B cell (primary cell): ENCODE measurements at regions of chr17 and their contacts with region 1.

Region 1: GRCh38 chr17:74736513-74737298 is at the start of gene RAB37:
- DNase-seq: peak; percentile 91
- ATAC-seq: peak; percentile 76
- H3K4me3 ChIP-seq: peak within 1 kb of the TSS; percentile 38 to 91 (median 75)
- H3K4me3 Mint-ChIP-seq: peak within 1 kb of the TSS; percentile 87
- H3K27ac ChIP-seq: peak within 1 kb of the TSS; percentile 52 to 74
- H3K27ac Mint-ChIP-seq: peak within 1 kb of the TSS; percentile 98
- H3K4me1 ChIP-seq: peaks cover 40 to 58% of the 10 kb centered on the region in 2 donors
- H3K4me1 Mint-ChIP-seq: peaks cover 42% of the 10 kb centered on the region
- H3K27me3 ChIP-seq: peaks cover 0 to 3% (median 0%) of the 10 kb centered on the region in 4 experiments
- H3K27me3 Mint-ChIP-seq: no peaks in the 10 kb centered on the region
- CTCF ChIP-seq: peak; percentile 68
- total RNA-seq, gene RAB37: 76.0 and 76.8 TPM in 2 replicates

Region 2: DNA sequence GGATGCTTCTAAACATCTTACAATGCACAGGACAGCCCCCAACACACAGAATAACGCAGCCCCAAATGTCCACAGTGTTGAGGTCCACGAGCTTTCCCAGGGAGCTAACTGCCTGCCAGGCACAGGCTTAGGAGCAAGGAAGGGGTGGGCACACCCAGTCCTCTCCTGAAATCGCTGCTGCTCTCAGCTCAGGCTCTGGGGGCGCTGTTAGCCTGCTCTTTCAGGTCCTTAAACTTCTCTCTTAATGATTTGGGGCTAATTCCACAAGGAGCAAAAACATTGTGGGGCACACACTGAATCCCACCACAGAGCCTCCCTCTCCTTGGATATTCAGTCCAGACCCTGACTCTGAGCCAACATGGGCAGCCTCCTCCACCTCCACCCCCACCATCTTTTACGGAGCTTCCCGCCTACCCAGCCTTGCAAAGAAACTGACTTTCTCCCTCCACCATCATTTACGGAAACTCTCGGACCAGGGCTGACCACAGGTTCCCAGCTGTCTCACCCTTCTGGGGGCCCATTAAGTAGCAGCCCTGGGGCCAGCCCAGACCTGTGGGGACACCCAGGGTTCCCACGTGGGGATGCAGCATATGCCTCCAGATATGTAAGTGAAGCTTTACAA is 170.5 kb before region 1 on chr17:
- CTCF ChIA-PET with region 1: interaction called, 46 read pairs
- POLR2A ChIA-PET with region 1: no interaction called
- intact Hi-C with region 1: loop called (anchors 1 kb)
- DNase-seq: peak; percentile 59
- ATAC-seq: peak; percentile 39
- H3K4me3 ChIP-seq: no peak overlapping the region
- H3K4me3 Mint-ChIP-seq: no peak overlapping the region
- H3K27ac ChIP-seq: no peak overlapping the region
- H3K27ac Mint-ChIP-seq: no peak overlapping the region
- H3K4me1 ChIP-seq: peaks cover 21 to 28% of the 10 kb centered on the region in 2 donors
- H3K4me1 Mint-ChIP-seq: peaks cover 10% of the 10 kb centered on the region
- H3K27me3 ChIP-seq: peaks cover 0 to 50% (median 6%) of the 10 kb centered on the region in 4 experiments
- H3K27me3 Mint-ChIP-seq: peaks cover 61% of the 10 kb centered on the region
- CTCF ChIP-seq: peak; percentile 64

Region 3: DNA sequence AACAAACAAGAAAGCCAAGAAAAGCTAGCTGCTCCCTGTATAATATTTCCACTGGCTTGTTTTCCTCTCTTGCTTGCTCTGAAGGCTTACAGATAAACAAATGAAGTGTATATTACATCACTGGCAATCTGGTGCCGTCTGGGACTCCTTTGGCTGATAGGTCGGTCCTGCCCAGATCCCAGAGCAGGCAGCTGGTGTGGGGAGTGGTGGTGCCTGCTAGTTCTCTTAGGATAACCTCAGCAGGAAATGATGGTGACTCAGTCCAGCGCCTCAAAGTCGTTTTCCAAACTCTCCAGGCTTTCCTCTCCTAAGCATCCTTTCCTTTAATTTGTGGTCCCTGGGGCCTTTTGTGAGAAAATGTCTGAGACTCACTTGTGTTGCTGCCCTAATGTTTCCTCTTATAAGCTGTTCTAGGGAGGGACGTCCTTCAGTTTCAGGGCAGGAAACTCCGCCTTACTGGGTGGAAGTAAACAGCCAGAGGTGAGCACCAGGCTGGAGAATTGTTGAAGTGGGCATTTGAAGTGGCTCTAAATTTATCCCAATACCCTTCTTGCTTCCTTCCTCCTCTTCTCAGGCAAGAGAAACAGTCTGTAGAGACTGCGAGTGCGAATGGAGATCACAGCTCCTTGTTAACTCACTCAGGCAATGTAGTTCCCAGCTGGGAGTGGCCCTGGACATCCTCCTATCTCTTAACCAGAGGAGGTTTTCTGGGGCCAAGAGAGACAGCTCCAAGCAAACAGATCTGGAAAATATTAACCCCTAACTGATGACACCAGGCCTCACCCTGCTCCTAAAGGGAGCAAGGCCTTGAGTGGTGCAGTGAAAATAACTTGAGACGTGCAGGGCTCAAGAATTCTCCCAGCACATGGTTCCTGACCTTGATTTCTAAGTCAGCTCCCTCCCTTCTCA is 58.9 kb before region 1 on chr17:
- CTCF ChIA-PET with region 1: interaction called, 13 read pairs
- POLR2A ChIA-PET with region 1: no interaction called
- intact Hi-C with region 1: no loop called
- DNase-seq: peak; percentile 24
- ATAC-seq: peak; percentile 21
- H3K4me3 ChIP-seq: peak overlapping the region in 1 of 5 experiments; percentile 2
- H3K4me3 Mint-ChIP-seq: peak overlapping the region; percentile 58
- H3K27ac ChIP-seq: no peak overlapping the region
- H3K27ac Mint-ChIP-seq: peak overlapping the region; percentile 71
- H3K4me1 ChIP-seq: peaks cover 22 to 23% of the 10 kb centered on the region in 2 donors
- H3K4me1 Mint-ChIP-seq: peaks cover 27% of the 10 kb centered on the region
- H3K27me3 ChIP-seq: peaks cover 0 to 28% (median 12%) of the 10 kb centered on the region in 4 experiments
- H3K27me3 Mint-ChIP-seq: peaks cover 33% of the 10 kb centered on the region
- CTCF ChIP-seq: no peak

Region 4: GRCh38 chr17:74723891-74724290 is 12.8 kb before region 1 on chr17:
- CTCF ChIA-PET with region 1: interaction called, 25 read pairs
- POLR2A ChIA-PET with region 1: no interaction called
- intact Hi-C with region 1: no loop called
- DNase-seq: no peak
- ATAC-seq: no peak
- H3K4me3 ChIP-seq: no peak overlapping the region
- H3K4me3 Mint-ChIP-seq: no peak overlapping the region
- H3K27ac ChIP-seq: no peak overlapping the region
- H3K27ac Mint-ChIP-seq: no peak overlapping the region
- H3K4me1 ChIP-seq: peaks cover 0 to 8% of the 10 kb centered on the region in 2 donors
- H3K4me1 Mint-ChIP-seq: no peaks in the 10 kb centered on the region
- H3K27me3 ChIP-seq: peaks cover 0 to 4% (median 0%) of the 10 kb centered on the region in 4 experiments
- H3K27me3 Mint-ChIP-seq: peaks cover 6% of the 10 kb centered on the region
- CTCF ChIP-seq: no peak

Region 5: GRCh38 chr17:74759243-74759801 is 22.6 kb after region 1 on chr17:
- CTCF ChIA-PET with region 1: interaction called, 18 read pairs
- POLR2A ChIA-PET with region 1: interaction called, 3 read pairs
- intact Hi-C with region 1: no loop called
- DNase-seq: peak; percentile 63
- ATAC-seq: peak; percentile 77
- H3K4me3 ChIP-seq: no peak overlapping the region
- H3K4me3 Mint-ChIP-seq: peak overlapping the region; percentile 56
- H3K27ac ChIP-seq: no peak overlapping the region
- H3K27ac Mint-ChIP-seq: peak overlapping the region; percentile 29
- H3K4me1 ChIP-seq: peaks cover 40 to 52% of the 10 kb centered on the region in 2 donors
- H3K4me1 Mint-ChIP-seq: peaks cover 46% of the 10 kb centered on the region
- H3K27me3 ChIP-seq: no peaks in the 10 kb centered on the region
- H3K27me3 Mint-ChIP-seq: no peaks in the 10 kb centered on the region
- CTCF ChIP-seq: no peak

Region 6: GRCh38 chr17:74776044-74776977 is 39.6 kb after region 1 on chr17 and contains the start of gene NAT9:
- CTCF ChIA-PET with region 1: interaction called, 76 read pairs
- POLR2A ChIA-PET with region 1: interaction called, 18 read pairs
- intact Hi-C with region 1: loop called (anchors 5 kb)
- DNase-seq: peak; percentile 98
- ATAC-seq: peak; percentile 79
- H3K4me3 ChIP-seq: peak within 1 kb of the TSS; percentile 66 to 79 (median 77)
- H3K4me3 Mint-ChIP-seq: peak within 1 kb of the TSS; percentile 99
- H3K27ac ChIP-seq: peak within 1 kb of the TSS; percentile 39 to 75
- H3K27ac Mint-ChIP-seq: peak within 1 kb of the TSS; percentile 96
- H3K4me1 ChIP-seq: peaks cover 40 to 46% of the 10 kb centered on the region in 2 donors
- H3K4me1 Mint-ChIP-seq: peaks cover 57% of the 10 kb centered on the region
- H3K27me3 ChIP-seq: no peaks in the 10 kb centered on the region
- H3K27me3 Mint-ChIP-seq: no peaks in the 10 kb centered on the region
- CTCF ChIP-seq: no peak
- total RNA-seq, gene NAT9: 66.6 and 71.1 TPM in 2 replicates

Region 7: GRCh38 chr17:74864866-74865395 is 128.2 kb after region 1 on chr17:
- CTCF ChIA-PET with region 1: interaction called, 45 read pairs
- POLR2A ChIA-PET with region 1: no interaction called
- intact Hi-C with region 1: no loop called
- DNase-seq: peak; percentile 81
- ATAC-seq: peak; percentile 78
- H3K4me3 ChIP-seq: no peak overlapping the region
- H3K4me3 Mint-ChIP-seq: no peak overlapping the region
- H3K27ac ChIP-seq: no peak overlapping the region
- H3K27ac Mint-ChIP-seq: no peak overlapping the region
- H3K4me1 ChIP-seq: peaks cover 25 to 26% of the 10 kb centered on the region in 2 donors
- H3K4me1 Mint-ChIP-seq: peaks cover 18% of the 10 kb centered on the region
- H3K27me3 ChIP-seq: peaks cover 0 to 36% (median 11%) of the 10 kb centered on the region in 4 experiments
- H3K27me3 Mint-ChIP-seq: peaks cover 16% of the 10 kb centered on the region
- CTCF ChIP-seq: peak; percentile 94